B cell (primary cell): ENCODE measurements at regions of chr2 and their contacts with region 1.

Region 1: GRCh38 chr2:121755236-121756111 is at the start of gene TSN:
- DNase-seq: peak; percentile 99
- ATAC-seq: peak; percentile 99
- H3K4me3 ChIP-seq: peak within 1 kb of the TSS; percentile 70 to 99 (median 95)
- H3K4me3 Mint-ChIP-seq: peak within 1 kb of the TSS; percentile 90
- H3K27ac ChIP-seq: peak within 1 kb of the TSS; percentile 49 to 84
- H3K27ac Mint-ChIP-seq: peak within 1 kb of the TSS; percentile 96
- H3K4me1 ChIP-seq: peaks cover 14 to 19% of the 10 kb centered on the region in 2 donors
- H3K4me1 Mint-ChIP-seq: peaks cover 27% of the 10 kb centered on the region
- H3K27me3 ChIP-seq: no peaks in the 10 kb centered on the region
- H3K27me3 Mint-ChIP-seq: no peaks in the 10 kb centered on the region
- CTCF ChIP-seq: no peak
- total RNA-seq, gene TSN: 43.4 and 46.0 TPM in 2 replicates

Region 2: GRCh38 chr2:121736462-121737341 is 18.8 kb before region 1 on chr2 and contains the start of gene NIFK:
- CTCF ChIA-PET with region 1: interaction called, 4 read pairs
- POLR2A ChIA-PET with region 1: interaction called, 11 read pairs
- intact Hi-C with region 1: loop called (anchors 1 kb)
- DNase-seq: peak; percentile 99
- ATAC-seq: peak; percentile 95
- H3K4me3 ChIP-seq: peak within 1 kb of the TSS; percentile 84 to 99 (median 98)
- H3K4me3 Mint-ChIP-seq: peak within 1 kb of the TSS; percentile 97
- H3K27ac ChIP-seq: peak within 1 kb of the TSS; percentile 59 to 92
- H3K27ac Mint-ChIP-seq: peak within 1 kb of the TSS; percentile 93
- H3K4me1 ChIP-seq: peaks cover 14 to 20% of the 10 kb centered on the region in 2 donors
- H3K4me1 Mint-ChIP-seq: peaks cover 19% of the 10 kb centered on the region
- H3K27me3 ChIP-seq: no peaks in the 10 kb centered on the region
- H3K27me3 Mint-ChIP-seq: no peaks in the 10 kb centered on the region
- CTCF ChIP-seq: no peak
- total RNA-seq, gene NIFK: 55.3 and 56.3 TPM in 2 replicates

Region 3: DNA sequence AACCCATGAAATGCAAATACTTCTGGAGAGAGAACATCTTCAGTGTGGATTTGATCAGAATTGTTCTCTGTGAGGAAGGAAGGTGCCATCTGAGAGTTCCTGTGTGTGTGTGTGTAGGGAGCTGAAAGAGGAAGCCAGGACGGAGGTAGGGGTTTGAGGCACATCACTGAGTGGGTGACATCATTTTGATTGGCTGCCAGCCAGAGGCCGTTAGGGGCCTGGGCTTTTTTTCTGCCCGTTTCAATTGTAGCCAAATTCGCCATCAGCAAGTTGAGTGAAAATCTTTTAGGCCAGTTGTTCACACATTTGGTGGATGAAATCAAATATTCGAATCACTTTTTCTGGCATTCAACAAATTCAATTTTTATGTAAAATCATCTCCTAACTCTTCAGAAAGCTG is 48.9 kb after region 1 on chr2:
- CTCF ChIA-PET with region 1: no interaction called
- POLR2A ChIA-PET with region 1: no interaction called
- intact Hi-C with region 1: no loop called
- DNase-seq: peak; percentile 29
- ATAC-seq: no peak
- H3K4me3 ChIP-seq: no peak overlapping the region
- H3K4me3 Mint-ChIP-seq: no peak overlapping the region
- H3K27ac ChIP-seq: no peak overlapping the region
- H3K27ac Mint-ChIP-seq: no peak overlapping the region
- H3K4me1 ChIP-seq: peaks cover 11 to 14% of the 10 kb centered on the region in 2 donors
- H3K4me1 Mint-ChIP-seq: peaks cover 16% of the 10 kb centered on the region
- H3K27me3 ChIP-seq: no peaks in the 10 kb centered on the region
- H3K27me3 Mint-ChIP-seq: peaks cover 3% of the 10 kb centered on the region
- CTCF ChIP-seq: no peak